ENCODE measurements at regions of chr19 and their contacts with region 1.

Region 1: DNA sequence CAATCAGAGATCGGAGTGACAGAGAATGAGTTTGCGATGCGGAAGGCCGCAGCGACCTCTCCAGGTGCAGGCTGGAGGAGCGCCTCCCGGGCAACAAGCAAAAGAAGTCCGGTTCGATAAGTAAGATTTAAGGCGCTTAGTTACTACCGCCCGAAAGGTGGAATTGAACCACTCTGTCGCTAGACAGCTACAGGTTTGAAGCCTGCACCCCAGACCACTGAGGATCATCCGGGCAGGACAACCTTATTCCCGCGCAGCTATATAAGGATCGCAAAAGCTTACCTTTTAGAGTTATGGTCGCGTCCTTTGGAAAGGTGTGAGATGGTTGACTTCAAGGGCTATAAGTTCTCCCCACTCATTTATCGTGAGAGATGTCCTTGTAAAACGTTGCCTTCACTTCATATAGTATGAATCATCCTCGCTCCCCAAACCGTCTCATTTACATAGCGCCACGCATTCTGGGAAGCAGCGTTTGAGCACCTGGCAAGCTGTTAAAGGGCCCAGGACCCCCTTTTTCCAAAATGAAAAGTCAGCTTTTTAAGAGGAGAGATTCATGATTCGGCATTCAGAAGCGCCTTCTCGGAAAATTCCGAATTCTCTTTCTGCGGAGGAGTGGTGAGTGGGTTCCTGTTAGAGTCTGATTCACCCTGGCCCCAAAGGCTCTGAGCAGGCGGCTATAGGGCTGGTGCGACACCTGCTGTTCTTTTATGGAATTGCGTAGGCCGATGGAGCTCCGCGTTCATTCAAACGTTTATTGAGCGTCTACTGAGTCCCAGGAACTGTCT is 10.8 kb downstream of the FOSB start:
- DNase-seq: peak; percentile 87
- H3K4me3 ChIP-seq: peak overlapping the region; percentile 47 to 58 (median 56)
- H3K27ac ChIP-seq: peak overlapping the region; percentile 99
- H3K4me1 ChIP-seq: peaks cover 5% of the 10 kb centered on the region
- H3K27me3 ChIP-seq: no peaks in the 10 kb centered on the region
- CTCF ChIP-seq: peak; percentile 96 to 98

Region 2: DNA sequence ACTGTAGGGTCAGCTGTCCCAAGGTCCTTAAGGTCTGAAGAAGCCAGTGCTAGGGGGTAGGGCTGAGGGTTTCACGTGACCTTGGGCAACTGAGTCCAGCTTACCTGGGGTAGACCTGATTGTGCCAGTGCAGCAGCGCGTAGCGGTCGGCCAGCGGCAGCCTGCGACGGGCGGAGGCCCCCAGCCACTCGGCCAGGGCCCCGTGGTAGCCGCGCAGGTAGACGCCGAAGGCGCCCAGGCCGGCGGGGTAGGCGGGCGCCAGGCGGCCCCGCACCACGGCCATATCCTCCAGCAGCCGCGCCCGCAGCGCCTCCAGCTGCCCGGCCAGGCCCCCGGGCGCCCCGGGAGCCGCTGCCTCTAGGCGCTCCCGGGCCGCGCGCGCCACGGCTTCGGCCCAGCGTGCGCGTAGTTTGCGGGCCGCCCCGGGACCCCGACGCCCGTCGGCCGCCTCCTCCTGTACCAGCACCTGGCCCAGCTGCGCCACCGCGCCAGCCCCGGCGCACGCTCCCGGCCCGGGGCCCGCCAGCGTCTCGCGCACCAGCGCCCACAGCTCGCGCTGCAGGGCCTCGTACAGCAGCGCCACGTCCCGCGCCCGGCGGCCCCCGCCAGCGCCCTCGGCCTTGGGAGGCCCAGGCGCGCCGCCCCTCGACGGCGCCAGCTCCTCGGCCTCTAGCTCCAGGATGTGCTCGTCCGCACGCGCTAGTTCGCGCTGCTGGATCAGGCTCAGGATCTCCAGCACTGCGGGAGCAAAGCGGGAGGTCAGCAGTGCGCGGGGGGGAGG is 244.4 kb before region 1 on chr19:
- CTCF ChIA-PET with region 1: no interaction called
- dilution Hi-C with region 1: loop called (anchors 10 kb)
- in situ Hi-C with region 1: no loop called
- intact Hi-C with region 1: no loop called
- DNase-seq: no peak
- H3K4me3 ChIP-seq: no peak overlapping the region
- H3K27ac ChIP-seq: no peak overlapping the region
- H3K4me1 ChIP-seq: peaks cover 18% of the 10 kb centered on the region
- H3K27me3 ChIP-seq: no peaks in the 10 kb centered on the region
- CTCF ChIP-seq: no peak

Region 3: DNA sequence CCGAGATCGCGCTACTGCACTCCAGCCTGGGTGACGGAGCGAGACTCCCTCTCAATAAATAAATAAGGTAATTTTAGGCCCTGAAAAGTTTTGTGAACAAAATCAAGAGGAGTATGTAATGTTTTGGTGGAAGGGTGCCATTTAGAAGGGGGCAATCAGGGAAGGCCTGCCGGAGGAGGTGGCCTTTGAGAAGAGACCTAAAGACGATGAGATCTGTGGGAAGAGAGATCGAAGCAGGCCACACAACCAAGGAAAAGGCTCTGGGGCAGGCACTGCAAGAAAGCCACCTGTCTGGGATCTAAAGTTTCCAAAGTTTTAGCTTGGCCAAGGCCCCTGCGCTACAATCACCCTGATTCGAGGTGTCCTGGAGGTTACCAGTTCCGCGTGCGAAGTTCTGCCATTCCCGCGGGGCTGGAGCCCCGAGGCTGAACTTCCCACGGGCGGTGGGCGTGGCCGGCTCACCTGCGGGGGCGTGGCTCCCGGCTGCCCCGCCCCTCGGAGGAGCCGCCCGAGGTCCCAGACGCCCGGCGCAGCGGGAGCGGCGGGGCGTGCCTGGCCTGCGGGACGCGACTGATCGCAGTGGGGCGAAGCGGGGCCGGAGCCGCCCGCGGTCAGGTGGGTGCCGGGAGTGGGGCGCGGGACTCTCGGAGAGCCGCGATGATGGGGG is 138.3 kb before region 1 on chr19 and contains the start of gene KLC3:
- CTCF ChIA-PET with region 1: no interaction called
- dilution Hi-C with region 1: no loop called
- in situ Hi-C with region 1: no loop called
- intact Hi-C with region 1: loop called (anchors 1 kb)
- DNase-seq: peak; percentile 53
- H3K4me3 ChIP-seq: peak within 1 kb of the TSS; percentile 59 to 88 (median 72)
- H3K27ac ChIP-seq: peak within 1 kb of the TSS; percentile 38
- H3K4me1 ChIP-seq: peaks cover 22% of the 10 kb centered on the region
- H3K27me3 ChIP-seq: no peaks in the 10 kb centered on the region
- CTCF ChIP-seq: no peak
- total RNA-seq, gene KLC3: 39.3 to 56.5 TPM

Region 4: GRCh38 chr19:45413497-45413896 is 65.1 kb before region 1 on chr19:
- CTCF ChIA-PET with region 1: no interaction called
- dilution Hi-C with region 1: loop called (anchors 5 kb)
- in situ Hi-C with region 1: no loop called
- intact Hi-C with region 1: no loop called
- DNase-seq: no peak
- H3K4me3 ChIP-seq: no peak overlapping the region
- H3K27ac ChIP-seq: no peak overlapping the region
- H3K4me1 ChIP-seq: no peaks in the 10 kb centered on the region
- H3K27me3 ChIP-seq: no peaks in the 10 kb centered on the region
- CTCF ChIP-seq: no peak

Region 5: GRCh38 chr19:45439569-45440254 is 38.9 kb before region 1 on chr19:
- CTCF ChIA-PET with region 1: interaction called, 35 read pairs
- dilution Hi-C with region 1: loop called (anchors 5 kb)
- in situ Hi-C with region 1: loop called (anchors 5 kb)
- intact Hi-C with region 1: loop called (anchors 1 kb)
- DNase-seq: peak; percentile 63
- H3K4me3 ChIP-seq: peak overlapping the region; percentile 55 to 58 (median 58)
- H3K27ac ChIP-seq: peak overlapping the region; percentile 61
- H3K4me1 ChIP-seq: peaks cover 14% of the 10 kb centered on the region
- H3K27me3 ChIP-seq: no peaks in the 10 kb centered on the region
- CTCF ChIP-seq: peak; percentile 84 to 88

Region 6: DNA sequence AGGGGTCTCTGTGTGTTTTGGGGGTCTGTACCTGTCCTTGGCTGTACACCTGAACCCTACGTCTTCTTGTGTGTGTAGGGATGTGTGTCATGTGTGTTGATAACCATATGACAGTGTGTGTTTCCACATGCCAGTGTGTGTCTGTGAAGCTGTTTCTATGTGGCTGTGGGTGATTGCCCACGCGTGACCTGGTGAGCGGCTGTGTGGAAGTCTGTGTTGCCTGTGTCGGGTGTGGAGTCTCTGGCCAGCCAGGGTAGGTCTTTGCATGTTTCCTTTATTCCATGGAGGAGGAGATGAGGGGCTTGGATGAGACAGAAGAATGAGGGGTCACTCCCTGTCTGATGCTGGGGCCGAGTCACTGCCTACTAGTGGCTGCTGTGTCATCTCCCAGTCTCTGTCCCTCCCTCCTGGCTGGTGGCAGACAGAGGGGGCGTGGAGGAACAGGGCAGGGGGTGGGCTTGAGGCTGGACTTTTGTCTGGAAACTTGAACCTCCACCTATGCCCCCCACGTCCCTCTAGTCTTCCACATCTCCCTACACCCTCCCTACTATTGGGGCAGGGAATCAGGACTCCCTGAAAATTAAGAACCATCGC is 13.7 kb before region 1 on chr19:
- CTCF ChIA-PET with region 1: no interaction called
- dilution Hi-C with region 1: no loop called
- in situ Hi-C with region 1: no loop called
- intact Hi-C with region 1: no loop called
- DNase-seq: no peak
- H3K4me3 ChIP-seq: no peak overlapping the region
- H3K27ac ChIP-seq: no peak overlapping the region
- H3K4me1 ChIP-seq: peaks cover 8% of the 10 kb centered on the region
- H3K27me3 ChIP-seq: no peaks in the 10 kb centered on the region
- CTCF ChIP-seq: no peak

Region 7: GRCh38 chr19:45558399-45558878 is 79.8 kb after region 1 on chr19:
- CTCF ChIA-PET with region 1: no interaction called
- dilution Hi-C with region 1: loop called (anchors 5 kb)
- in situ Hi-C with region 1: no loop called
- intact Hi-C with region 1: no loop called
- DNase-seq: peak; percentile 40
- H3K4me3 ChIP-seq: no peak overlapping the region
- H3K27ac ChIP-seq: no peak overlapping the region
- H3K4me1 ChIP-seq: peaks cover 20% of the 10 kb centered on the region
- H3K27me3 ChIP-seq: no peaks in the 10 kb centered on the region
- CTCF ChIP-seq: peak; percentile 88 to 90

Region 8: GRCh38 chr19:45739498-45740439 is 261.1 kb after region 1 on chr19:
- CTCF ChIA-PET with region 1: no interaction called
- dilution Hi-C with region 1: no loop called
- in situ Hi-C with region 1: no loop called
- intact Hi-C with region 1: no loop called
- DNase-seq: no peak
- H3K4me3 ChIP-seq: no peak overlapping the region
- H3K27ac ChIP-seq: no peak overlapping the region
- H3K4me1 ChIP-seq: no peaks in the 10 kb centered on the region
- H3K27me3 ChIP-seq: no peaks in the 10 kb centered on the region
- CTCF ChIP-seq: no peak

Measured in mammary epithelial cell (primary cell).